MCF 10A (cell line): ENCODE measurements at regions of chr14 and their contacts with region 1.

Region 1: GRCh38 chr14:67240978-67241414 is 239 bp upstream of the PALS1 start:
- DNase-seq: peak; percentile 95
- H3K4me3 Mint-ChIP-seq: peak overlapping the region; percentile 80
- H3K27ac Mint-ChIP-seq: peak overlapping the region; percentile 76
- H3K4me1 Mint-ChIP-seq: peaks cover 15% of the 10 kb centered on the region
- H3K27me3 Mint-ChIP-seq: no peaks in the 10 kb centered on the region
- CTCF ChIP-seq: no peak

Region 2: GRCh38 chr14:66507722-66508546 is 733.1 kb before region 1 on chr14 and contains the start of gene GPHN:
- CTCF ChIA-PET with region 1: no interaction called
- POLR2A ChIA-PET with region 1: interaction called, 7 read pairs
- intact Hi-C with region 1: loop called (anchors 5 kb)
- DNase-seq: peak; percentile 99
- H3K4me3 Mint-ChIP-seq: peak within 1 kb of the TSS; percentile 78
- H3K27ac Mint-ChIP-seq: peak within 1 kb of the TSS; percentile 88
- H3K4me1 Mint-ChIP-seq: peaks cover 20% of the 10 kb centered on the region
- H3K27me3 Mint-ChIP-seq: no peaks in the 10 kb centered on the region
- CTCF ChIP-seq: peak; percentile 21
- total RNA-seq, gene GPHN: 26.8 and 33.0 TPM in 2 replicates

Region 3: DNA sequence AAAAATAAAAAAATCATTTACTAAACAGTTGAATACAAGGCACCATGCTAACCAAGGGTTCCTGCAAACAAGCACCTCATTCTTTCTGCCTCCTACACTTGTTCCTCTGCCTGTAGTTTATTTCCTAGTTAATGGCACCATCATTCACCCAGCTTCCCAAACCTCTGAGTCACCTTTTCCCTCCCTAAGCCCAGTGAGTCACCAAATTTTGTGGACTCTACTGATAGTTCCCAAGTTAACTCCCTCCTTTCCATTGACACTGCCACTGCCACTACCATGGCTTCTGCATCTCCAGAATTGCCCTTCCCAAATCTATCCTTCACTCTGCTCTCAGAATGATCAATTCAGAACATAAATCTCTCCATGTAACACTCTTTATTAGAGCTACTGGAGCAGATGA is 53.8 kb before region 1 on chr14:
- CTCF ChIA-PET with region 1: interaction called, 3 read pairs
- POLR2A ChIA-PET with region 1: interaction called, 33 read pairs
- intact Hi-C with region 1: loop called (anchors 2 kb)
- DNase-seq: peak; percentile 90
- H3K4me3 Mint-ChIP-seq: no peak overlapping the region
- H3K27ac Mint-ChIP-seq: no peak overlapping the region
- H3K4me1 Mint-ChIP-seq: peaks cover 9% of the 10 kb centered on the region
- H3K27me3 Mint-ChIP-seq: no peaks in the 10 kb centered on the region
- CTCF ChIP-seq: no peak

Region 4: DNA sequence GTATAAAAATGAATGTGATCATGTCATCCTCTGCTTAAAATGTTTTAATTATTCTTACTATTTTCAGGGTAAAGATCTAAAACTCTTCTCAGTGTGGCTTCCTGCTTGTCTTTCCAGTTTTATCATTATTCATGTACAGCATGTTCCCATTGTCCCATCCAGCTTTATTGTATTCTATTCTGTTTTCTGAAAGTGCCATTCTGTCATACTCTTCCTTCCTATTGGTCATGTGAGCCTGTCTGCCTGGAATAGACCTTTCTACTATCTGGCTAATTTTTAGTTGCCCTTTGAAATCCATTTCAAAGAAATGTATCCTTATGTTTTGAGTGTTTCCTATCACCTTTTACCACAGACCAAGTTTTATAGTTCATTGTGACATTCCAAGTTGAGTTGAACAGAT is 35.1 kb after region 1 on chr14:
- CTCF ChIA-PET with region 1: no interaction called
- POLR2A ChIA-PET with region 1: no interaction called
- intact Hi-C with region 1: loop called (anchors 5 kb)
- DNase-seq: no peak
- H3K4me3 Mint-ChIP-seq: no peak overlapping the region
- H3K27ac Mint-ChIP-seq: no peak overlapping the region
- H3K4me1 Mint-ChIP-seq: peaks cover 6% of the 10 kb centered on the region
- H3K27me3 Mint-ChIP-seq: no peaks in the 10 kb centered on the region
- CTCF ChIP-seq: no peak

Region 5: GRCh38 chr14:67359775-67360648 is 119.0 kb after region 1 on chr14 and contains the starts of genes ATP6V1D and EIF2S1:
- CTCF ChIA-PET with region 1: interaction called, 3 read pairs
- POLR2A ChIA-PET with region 1: interaction called, 25 read pairs
- intact Hi-C with region 1: loop called (anchors 1 kb)
- DNase-seq: peak; percentile 99
- H3K4me3 Mint-ChIP-seq: peak within 1 kb of the TSS; percentile 90
- H3K27ac Mint-ChIP-seq: peak within 1 kb of the TSS; percentile 99
- H3K4me1 Mint-ChIP-seq: peaks cover 54% of the 10 kb centered on the region
- H3K27me3 Mint-ChIP-seq: no peaks in the 10 kb centered on the region
- CTCF ChIP-seq: peak; percentile 99
- total RNA-seq, gene ATP6V1D: 70.7 and 74.1 TPM in 2 replicates
- total RNA-seq, gene EIF2S1: 337 and 338 TPM in 2 replicates